Esophagus muscularis mucosa (tissue), 4 donors: ENCODE measurements at regions of chr1 and their contacts with region 1.

Region 1: DNA sequence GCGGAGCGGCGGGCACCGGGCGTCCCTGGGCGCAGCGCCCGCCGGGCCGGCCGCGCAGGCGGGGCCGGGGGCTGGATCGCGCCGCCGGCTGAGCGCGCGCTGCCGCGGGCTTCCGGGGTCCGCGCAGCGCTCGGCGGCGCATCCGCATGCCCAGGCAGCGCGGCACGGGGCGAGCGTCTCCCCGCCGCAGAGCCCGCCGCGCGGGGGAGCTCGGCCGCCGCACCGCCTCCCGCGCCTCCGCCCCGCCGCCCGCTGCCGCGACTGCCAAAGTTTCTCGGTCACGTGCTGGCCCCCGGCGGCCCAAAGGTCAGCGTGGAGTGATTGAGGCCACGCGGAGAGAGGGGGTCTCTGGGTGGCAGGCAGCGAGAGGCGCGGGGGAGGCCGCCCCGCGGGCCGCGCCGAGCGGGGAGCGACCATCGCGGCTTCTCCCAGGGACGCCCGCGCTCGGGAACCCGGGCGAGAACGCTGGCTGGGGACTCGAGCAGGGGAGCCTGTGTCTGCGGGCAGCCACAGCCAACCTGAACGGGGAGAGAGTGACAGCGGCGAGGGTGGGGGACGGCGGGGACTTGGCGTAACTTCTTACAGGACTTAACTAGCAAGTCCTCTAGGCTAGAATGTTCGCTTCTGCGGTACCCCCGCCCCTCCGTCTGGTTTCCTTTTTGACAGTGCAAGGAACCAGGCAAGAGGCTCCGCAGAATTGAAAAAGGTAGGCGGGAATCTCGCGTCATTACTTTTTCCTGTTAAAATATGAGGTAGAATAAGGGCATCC is at the start of gene ILDR2:
- DNase-seq: peak; percentile 92
- H3K4me3 ChIP-seq: peak within 1 kb of the TSS; percentile 76 to 92 (median 82)
- H3K27ac ChIP-seq: peak within 1 kb of the TSS; percentile 84 to 86 (median 85)
- H3K4me1 ChIP-seq: peaks cover 11 to 33% (median 19%) of the 10 kb centered on the region in 4 donors
- H3K27me3 ChIP-seq: peaks cover 0 to 4% (median 0%) of the 10 kb centered on the region in 4 donors
- CTCF ChIP-seq: no peak
- EP300 ChIP-seq: no peak
- POLR2A ChIP-seq: no peak
- total RNA-seq, gene ILDR2: 5.3 to 13.7 (median 9.4) TPM

Region 2: GRCh38 chr1:166920561-166921475 is 54.7 kb before region 1 on chr1:
- intact Hi-C with region 1: loop called (anchors 5 kb)
- DNase-seq: no peak
- H3K4me3 ChIP-seq: peak overlapping the region; percentile 58 to 70 (median 60)
- H3K27ac ChIP-seq: peak overlapping the region; percentile 61 to 75 (median 71)
- H3K4me1 ChIP-seq: peaks cover 3 to 24% (median 17%) of the 10 kb centered on the region in 4 donors
- H3K27me3 ChIP-seq: peaks cover 0 to 16% (median 0%) of the 10 kb centered on the region in 4 donors
- CTCF ChIP-seq: no peak
- EP300 ChIP-seq: no peak
- POLR2A ChIP-seq: no peak

Region 3: DNA sequence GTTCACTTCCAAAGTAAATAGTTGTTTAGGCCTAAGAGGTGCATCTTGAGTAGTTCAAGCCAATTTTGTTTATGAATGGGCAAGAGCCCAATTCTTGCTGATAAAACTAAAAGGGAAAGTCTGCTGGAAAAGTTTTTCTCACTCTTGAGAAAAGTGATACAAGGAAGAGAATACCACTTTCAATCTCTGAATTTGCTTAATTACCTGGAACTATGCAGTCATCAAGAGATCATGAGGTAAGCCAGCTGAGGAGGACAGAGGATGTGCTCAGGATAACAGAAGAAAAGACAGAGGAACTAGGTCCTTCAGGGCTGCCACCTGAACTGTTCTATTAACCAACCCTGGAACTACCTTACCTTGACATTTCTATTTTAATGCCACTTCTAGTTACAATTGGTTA is 42.4 kb before region 1 on chr1:
- intact Hi-C with region 1: no loop called
- DNase-seq: peak; percentile 17
- H3K4me3 ChIP-seq: no peak overlapping the region
- H3K27ac ChIP-seq: no peak overlapping the region
- H3K4me1 ChIP-seq: no peaks in the 10 kb centered on the region
- H3K27me3 ChIP-seq: no peaks in the 10 kb centered on the region
- CTCF ChIP-seq: no peak
- EP300 ChIP-seq: no peak
- POLR2A ChIP-seq: no peak

Region 4: DNA sequence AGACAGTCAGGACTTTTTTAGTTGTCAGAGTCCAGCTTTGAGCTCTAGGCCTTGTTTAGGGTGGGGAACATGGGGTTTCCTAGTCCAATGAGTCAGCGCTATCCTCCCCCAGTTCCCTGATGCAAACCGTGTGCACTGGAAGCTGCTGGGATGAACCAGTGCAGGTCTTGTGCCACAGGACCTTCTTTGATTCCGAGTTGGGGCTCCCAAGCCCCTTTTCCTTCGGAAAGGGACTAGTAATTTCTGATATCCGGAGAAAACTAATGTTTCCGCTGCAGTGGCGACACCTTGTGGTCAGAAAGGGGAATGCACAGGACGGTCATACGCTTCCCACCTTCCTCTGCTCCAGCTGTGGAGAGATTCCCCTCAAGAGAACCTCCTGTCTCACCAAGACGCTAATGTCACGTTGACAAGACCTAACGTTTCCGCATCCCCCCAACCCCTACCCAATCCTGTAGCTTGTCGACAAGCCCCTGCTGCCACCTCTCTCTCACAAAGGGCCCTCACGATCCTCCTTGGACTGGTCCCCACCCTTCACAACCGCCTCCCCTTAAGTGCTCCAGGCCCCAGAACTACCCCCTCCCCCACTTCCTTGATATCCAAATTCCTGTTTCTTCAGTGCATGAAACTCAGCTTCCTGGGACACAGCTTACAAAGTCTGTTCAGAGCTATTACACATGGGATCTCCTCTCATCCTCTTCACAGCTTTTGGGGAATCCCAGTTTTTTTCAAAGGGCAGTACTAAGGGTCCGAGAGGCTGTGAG is 83.7 kb after region 1 on chr1:
- intact Hi-C with region 1: loop called (anchors 5 kb)
- DNase-seq: peak; percentile 92
- H3K4me3 ChIP-seq: no peak overlapping the region
- H3K27ac ChIP-seq: no peak overlapping the region
- H3K4me1 ChIP-seq: peaks cover 0 to 10% (median 7%) of the 10 kb centered on the region in 4 donors
- H3K27me3 ChIP-seq: peaks cover 0 to 12% (median 4%) of the 10 kb centered on the region in 4 donors
- CTCF ChIP-seq: peak; percentile 89 to 98 (median 97)
- EP300 ChIP-seq: no peak
- POLR2A ChIP-seq: no peak